ENCODE measurements at regions of chr18 and their contacts with region 1.

Region 1: GRCh38 chr18:2932247-2933181 is 80.4 kb downstream of the LPIN2 start:
- DNase-seq: peak in 1 of 2 donors; percentile 58
- H3K4me3 ChIP-seq: no peak overlapping the region
- H3K27ac ChIP-seq: peak overlapping the region; percentile 2 to 16
- H3K4me1 ChIP-seq: no peaks in the 10 kb centered on the region
- H3K27me3 ChIP-seq: no peaks in the 10 kb centered on the region
- CTCF ChIP-seq: peak; percentile 70 to 80 (median 78)
- POLR2A ChIP-seq: no peak

Region 2: DNA sequence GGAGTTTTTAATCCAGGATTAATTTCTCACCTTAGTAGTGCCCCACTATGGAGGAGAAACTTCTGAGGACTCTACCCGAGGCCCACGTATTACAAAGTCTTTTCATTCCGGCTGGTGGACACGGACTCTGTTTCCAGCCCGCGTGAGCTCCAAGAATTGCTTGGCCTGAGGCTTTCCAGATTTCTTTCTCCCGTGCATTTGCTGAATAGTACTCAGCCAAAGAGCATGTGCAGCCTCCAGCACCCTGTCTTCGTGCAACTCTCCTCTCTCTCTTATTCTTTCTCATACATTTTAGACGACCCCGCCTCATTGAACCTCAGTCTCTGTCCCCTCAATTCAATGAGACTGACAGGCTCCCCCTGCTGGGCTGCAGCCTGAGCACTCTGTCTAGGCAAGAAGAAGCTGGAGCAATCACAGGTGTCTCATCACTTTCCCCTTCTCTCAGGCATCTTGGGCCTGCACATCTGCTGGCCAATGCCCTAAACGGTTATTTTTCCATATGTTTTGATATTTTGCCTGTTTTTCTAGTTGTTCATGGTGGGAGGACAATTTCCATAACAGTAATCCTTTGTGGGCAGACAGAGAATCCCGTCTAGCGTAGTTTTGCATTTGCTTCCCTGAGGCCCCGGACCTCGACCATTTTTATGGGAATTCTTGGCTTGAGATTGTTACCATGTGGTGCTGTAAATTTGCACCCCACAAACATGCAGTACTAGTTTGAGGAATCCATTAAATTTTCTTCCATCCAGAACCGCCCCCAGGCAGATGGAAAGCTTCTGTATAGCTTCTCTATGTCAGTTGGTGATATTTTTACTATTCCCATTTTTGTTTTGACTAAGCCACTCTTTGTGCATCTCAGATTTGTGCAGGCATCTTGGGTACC is 130.5 kb after region 1 on chr18:
- intact Hi-C with region 1: loop called (anchors 5 kb)
- DNase-seq: peak; percentile 65 to 68
- H3K4me3 ChIP-seq: no peak overlapping the region
- H3K27ac ChIP-seq: no peak overlapping the region
- H3K4me1 ChIP-seq: no peaks in the 10 kb centered on the region
- H3K27me3 ChIP-seq: no peaks in the 10 kb centered on the region
- CTCF ChIP-seq: peak; percentile 59 to 74 (median 62)
- POLR2A ChIP-seq: no peak

Region 3: DNA sequence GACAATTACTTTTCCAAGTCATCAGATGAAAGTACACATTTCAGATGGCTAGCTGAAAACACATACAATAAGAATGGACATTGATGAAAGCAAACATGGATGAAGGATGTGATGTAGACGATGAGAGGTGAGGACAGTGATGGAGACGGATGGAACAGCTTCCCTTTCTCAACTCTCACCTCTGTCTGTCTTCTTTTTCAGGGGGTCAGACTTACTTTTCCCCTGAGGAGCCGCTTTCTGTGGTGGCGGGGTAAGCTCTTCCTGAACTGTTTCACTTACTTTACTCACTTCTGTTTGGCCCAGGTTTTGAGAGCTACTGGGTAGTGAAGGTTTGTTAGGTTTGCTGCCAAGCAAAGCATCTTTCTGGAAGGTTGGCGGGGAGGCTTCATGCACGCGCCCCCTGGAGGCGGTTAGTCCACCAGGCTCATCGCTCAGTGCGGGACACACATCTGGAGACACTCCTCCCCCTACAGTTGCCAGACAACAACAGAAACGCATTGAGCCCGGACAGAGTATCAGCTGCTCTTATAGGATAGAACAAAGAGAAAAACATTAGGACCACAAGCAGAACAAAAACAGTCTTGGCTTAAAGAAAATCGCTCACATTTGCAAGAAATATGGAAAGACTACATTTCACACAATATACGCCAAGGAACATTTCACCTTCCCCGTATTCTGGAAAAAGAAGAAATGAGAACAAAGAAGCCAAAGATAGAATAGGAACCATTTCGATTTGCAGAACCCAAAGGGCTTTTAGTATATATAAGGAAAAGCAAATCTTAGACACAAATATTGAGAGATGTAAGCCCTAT is 196.7 kb after region 1 on chr18:
- intact Hi-C with region 1: loop called (anchors 10 kb)
- DNase-seq: peak; percentile 81
- H3K4me3 ChIP-seq: no peak overlapping the region
- H3K27ac ChIP-seq: no peak overlapping the region
- H3K4me1 ChIP-seq: no peaks in the 10 kb centered on the region
- H3K27me3 ChIP-seq: no peaks in the 10 kb centered on the region
- CTCF ChIP-seq: peak; percentile 70 to 85 (median 77)
- POLR2A ChIP-seq: no peak